PC-3 (cell line): ENCODE measurements at regions of chr3 and their contacts with region 1.

Region 1: DNA sequence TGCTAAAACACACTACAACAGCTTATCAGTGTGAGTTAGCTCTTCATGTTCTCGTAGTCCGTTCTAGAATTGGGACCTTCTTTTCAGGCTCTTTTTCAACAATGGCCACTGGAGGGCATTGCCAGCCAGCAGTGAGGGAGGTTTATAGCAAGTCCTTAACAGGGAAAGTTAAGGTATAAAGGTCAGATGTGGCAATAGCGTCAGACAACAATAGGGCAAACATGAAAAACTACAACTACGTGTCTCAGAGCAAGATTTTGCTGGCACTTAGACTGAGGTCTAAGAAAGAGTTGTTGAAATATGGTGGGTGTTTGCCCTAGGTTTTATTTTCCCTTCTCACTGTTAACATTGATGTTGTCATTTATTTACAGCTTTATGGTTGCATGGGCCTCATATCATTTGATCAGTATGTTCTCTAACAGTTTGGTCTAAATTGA is 161.4 kb downstream of the GMNC start:
- DNase-seq: peak; percentile 87
- ATAC-seq: peak; percentile 93
- H3K4me3 ChIP-seq: no peak overlapping the region
- H3K27ac ChIP-seq: no peak overlapping the region
- H3K4me1 ChIP-seq: peaks cover 19% of the 10 kb centered on the region
- H3K27me3 ChIP-seq: no peaks in the 10 kb centered on the region
- CTCF ChIP-seq: peak; percentile 95

Region 2: DNA sequence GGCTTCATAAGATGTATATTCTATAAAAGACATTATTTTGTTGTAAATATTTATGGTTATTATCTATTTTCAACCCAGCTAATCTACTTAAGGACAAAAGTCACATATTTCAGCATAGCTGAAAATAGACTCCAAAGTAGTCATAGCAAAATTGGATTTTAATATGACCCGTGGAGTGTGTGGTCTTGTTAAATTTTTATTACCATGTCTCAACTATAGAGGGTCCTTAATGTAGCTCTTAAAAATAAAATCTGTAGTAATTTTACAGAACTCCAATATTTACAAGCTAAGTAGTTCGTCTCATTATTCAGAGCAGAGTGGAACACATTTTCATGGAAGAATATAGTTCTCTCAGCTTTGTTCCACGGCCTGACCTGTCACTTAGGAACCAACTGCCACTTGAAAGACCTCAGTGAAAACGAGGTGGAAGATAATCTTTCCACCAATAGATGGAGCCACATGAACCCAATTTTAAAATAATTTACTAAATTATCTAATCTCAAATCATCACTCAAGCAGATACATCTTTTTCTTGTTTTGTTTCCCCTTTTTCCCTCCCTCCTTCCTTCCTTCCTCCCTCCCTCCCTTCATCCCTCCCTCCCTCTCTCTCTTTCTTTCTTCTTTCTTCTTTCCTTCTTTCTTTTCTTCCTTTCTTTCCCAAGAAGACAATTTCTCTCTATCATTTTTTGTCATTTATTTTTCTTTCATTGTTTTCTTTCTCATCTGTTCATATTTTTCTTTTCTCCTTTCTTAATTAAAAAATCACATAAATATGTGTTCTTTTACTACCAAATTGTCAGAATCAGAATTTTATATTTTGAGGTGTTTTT is 476.0 kb before region 1 on chr3:
- CTCF ChIA-PET with region 1: no interaction called
- POLR2A ChIA-PET with region 1: no interaction called
- intact Hi-C with region 1: loop called (anchors 5 kb)
- DNase-seq: peak; percentile 78
- ATAC-seq: peak; percentile 73
- H3K4me3 ChIP-seq: no peak overlapping the region
- H3K27ac ChIP-seq: no peak overlapping the region
- H3K4me1 ChIP-seq: peaks cover 11% of the 10 kb centered on the region
- H3K27me3 ChIP-seq: no peaks in the 10 kb centered on the region
- CTCF ChIP-seq: peak; percentile 72

Region 3: GRCh38 chr3:190666821-190667220 is 34.3 kb before region 1 on chr3:
- CTCF ChIA-PET with region 1: no interaction called
- POLR2A ChIA-PET with region 1: no interaction called
- intact Hi-C with region 1: no loop called
- DNase-seq: no peak
- ATAC-seq: no peak
- H3K4me3 ChIP-seq: no peak overlapping the region
- H3K27ac ChIP-seq: no peak overlapping the region
- H3K4me1 ChIP-seq: no peaks in the 10 kb centered on the region
- H3K27me3 ChIP-seq: no peaks in the 10 kb centered on the region
- CTCF ChIP-seq: no peak

Region 4: GRCh38 chr3:190734490-190734889 is 33.4 kb after region 1 on chr3:
- CTCF ChIA-PET with region 1: no interaction called
- POLR2A ChIA-PET with region 1: no interaction called
- intact Hi-C with region 1: no loop called
- DNase-seq: no peak
- ATAC-seq: no peak
- H3K4me3 ChIP-seq: no peak overlapping the region
- H3K27ac ChIP-seq: no peak overlapping the region
- H3K4me1 ChIP-seq: no peaks in the 10 kb centered on the region
- H3K27me3 ChIP-seq: no peaks in the 10 kb centered on the region
- CTCF ChIP-seq: no peak

Region 5: DNA sequence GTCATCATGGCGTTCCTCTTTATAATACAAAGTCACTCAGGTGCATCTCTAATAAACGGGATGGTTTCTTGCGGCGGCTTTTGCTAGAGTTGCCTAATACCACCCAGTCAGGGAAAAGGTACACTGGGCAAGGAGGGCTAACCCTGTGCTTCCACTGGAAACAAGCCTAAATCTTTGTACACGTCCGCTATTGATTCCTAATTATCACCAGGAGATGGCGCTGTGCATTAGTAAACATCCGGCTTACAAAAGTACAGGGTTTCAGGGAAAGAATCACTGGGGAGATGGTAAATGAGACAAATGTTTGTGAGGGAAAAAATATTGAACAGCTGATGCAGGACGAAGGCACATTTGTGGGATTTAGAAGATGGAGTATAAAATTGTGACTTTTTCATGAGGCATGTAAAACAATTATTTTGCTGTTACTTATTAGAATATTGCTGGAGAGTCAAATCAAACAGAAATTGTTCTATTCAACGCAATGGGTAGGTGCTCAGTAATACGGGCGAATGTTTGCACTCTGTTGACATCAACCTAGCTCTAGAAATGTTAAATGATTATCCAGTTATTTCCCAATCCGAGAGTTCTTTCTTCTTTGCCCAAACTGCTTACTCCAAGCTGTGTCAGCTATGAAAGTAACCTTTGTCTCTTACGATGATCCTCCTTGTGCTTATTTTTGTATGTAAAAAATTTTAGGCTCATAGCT is 110.8 kb after region 1 on chr3:
- CTCF ChIA-PET with region 1: interaction called, 9 read pairs
- POLR2A ChIA-PET with region 1: no interaction called
- intact Hi-C with region 1: loop called (anchors 1 kb)
- DNase-seq: peak; percentile 83
- ATAC-seq: peak; percentile 80
- H3K4me3 ChIP-seq: peak overlapping the region; percentile 57
- H3K27ac ChIP-seq: no peak overlapping the region
- H3K4me1 ChIP-seq: peaks cover 10% of the 10 kb centered on the region
- H3K27me3 ChIP-seq: no peaks in the 10 kb centered on the region
- CTCF ChIP-seq: peak; percentile 91

Region 6: GRCh38 chr3:190883973-190884832 is 183.1 kb after region 1 on chr3:
- CTCF ChIA-PET with region 1: interaction called, 4 read pairs
- POLR2A ChIA-PET with region 1: no interaction called
- intact Hi-C with region 1: loop called (anchors 5 kb)
- DNase-seq: peak; percentile 88
- ATAC-seq: peak; percentile 89
- H3K4me3 ChIP-seq: peak overlapping the region; percentile 35; the same call in 1 of the 2 replicates
- H3K27ac ChIP-seq: no peak overlapping the region
- H3K4me1 ChIP-seq: no peaks in the 10 kb centered on the region
- H3K27me3 ChIP-seq: no peaks in the 10 kb centered on the region
- CTCF ChIP-seq: peak; percentile 96

Region 7: GRCh38 chr3:192444096-192444790 is 1743.1 kb after region 1 on chr3:
- CTCF ChIA-PET with region 1: no interaction called
- POLR2A ChIA-PET with region 1: no interaction called
- intact Hi-C with region 1: loop called (anchors 1 kb)
- DNase-seq: peak; percentile 80
- ATAC-seq: peak; percentile 92
- H3K4me3 ChIP-seq: no peak overlapping the region
- H3K27ac ChIP-seq: no peak overlapping the region
- H3K4me1 ChIP-seq: no peaks in the 10 kb centered on the region
- H3K27me3 ChIP-seq: peaks cover 64% of the 10 kb centered on the region
- CTCF ChIP-seq: peak; percentile 98